K562 (cell line): ENCODE measurements at regions of chr14 and their contacts with region 1.

Region 1: DNA sequence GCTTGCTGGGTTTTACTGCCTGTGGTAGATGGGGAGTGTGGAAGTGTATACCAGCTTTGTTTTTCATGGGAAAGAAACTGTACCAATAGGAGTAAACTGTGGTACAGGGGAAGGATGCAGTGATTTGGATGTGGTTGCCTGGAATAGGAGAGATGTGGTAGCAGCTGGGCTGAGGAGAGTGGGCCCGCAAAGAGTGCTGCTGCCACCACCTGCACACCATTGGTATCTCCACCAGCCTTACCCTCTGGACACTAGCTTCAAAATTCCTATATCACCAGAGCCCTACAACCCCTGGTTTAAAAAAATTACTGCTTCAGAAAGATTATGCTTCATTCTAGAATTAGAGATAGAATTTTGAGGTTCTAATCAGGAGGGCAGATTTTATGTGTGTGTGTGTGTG is 53.6 kb downstream of the AKAP6 start:
- DNase-seq: peak in 1 of 4 experiments; percentile 12
- ATAC-seq: peak; percentile 74; the same call in 2 of the 3 replicates
- H3K4me3 ChIP-seq: no peak overlapping the region
- H3K27ac ChIP-seq: no peak overlapping the region
- H3K4me1 ChIP-seq: 0 out of 5 replicates have a peak, but pooled peaks cover 0 to 2% of the 10 kb centered on the region in 2 experiments
- H3K27me3 ChIP-seq: no peaks in the 10 kb centered on the region
- CTCF ChIP-seq: peak; percentile 28 to 43 (median 32); a peak in 4 of 6 replicates
- EP300 ChIP-seq: no peak
- POLR2A ChIP-seq: no peak
- RAD21 ChIP-seq: peak in 1 of 2 experiments; percentile 51; a peak in 2 of 4 replicates

Region 2: DNA sequence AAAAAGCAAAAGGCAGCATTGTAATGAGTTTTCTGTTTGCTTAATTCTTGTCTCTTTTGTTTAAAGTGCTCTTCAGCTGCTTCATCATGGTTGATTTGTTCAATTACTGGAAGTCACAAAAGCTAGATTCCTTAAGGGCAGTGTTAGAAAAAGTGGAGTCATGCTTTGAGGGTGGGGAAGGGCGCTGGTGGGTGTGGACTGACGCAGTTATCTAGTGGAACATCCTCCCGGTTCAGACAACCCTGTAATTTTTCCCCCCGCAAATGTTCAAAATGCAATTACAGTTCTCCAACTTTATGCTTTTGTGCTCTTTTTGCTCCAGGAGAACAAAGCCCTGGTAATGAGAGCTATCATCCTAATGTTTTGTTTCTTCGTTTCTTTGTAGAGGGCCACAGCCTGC is 51.5 kb before region 1 on chr14:
- CTCF ChIA-PET with region 1: no interaction called
- POLR2A ChIA-PET with region 1: no interaction called
- in situ Hi-C with region 1: no loop called
- intact Hi-C with region 1: loop called (anchors 10 kb)
- DNase-seq: peak; percentile 18 to 73 (median 42)
- ATAC-seq: peak; percentile 93
- H3K4me3 ChIP-seq: no peak overlapping the region
- H3K27ac ChIP-seq: peak overlapping the region; percentile 58
- H3K4me1 ChIP-seq: peaks cover 0 to 24% of the 10 kb centered on the region in 2 experiments; a peak in 3 of 5 replicates
- H3K27me3 ChIP-seq: no peaks in the 10 kb centered on the region
- CTCF ChIP-seq: no peak
- EP300 ChIP-seq: no peak
- POLR2A ChIP-seq: no peak
- RAD21 ChIP-seq: no peak